Activated CD8-positive, alpha-beta T cell treated with anti-CD3 and anti-CD28 coated beads for 36 hours (primary cell): ENCODE measurements at regions of chr15 and their contacts with region 1.

Region 1: DNA sequence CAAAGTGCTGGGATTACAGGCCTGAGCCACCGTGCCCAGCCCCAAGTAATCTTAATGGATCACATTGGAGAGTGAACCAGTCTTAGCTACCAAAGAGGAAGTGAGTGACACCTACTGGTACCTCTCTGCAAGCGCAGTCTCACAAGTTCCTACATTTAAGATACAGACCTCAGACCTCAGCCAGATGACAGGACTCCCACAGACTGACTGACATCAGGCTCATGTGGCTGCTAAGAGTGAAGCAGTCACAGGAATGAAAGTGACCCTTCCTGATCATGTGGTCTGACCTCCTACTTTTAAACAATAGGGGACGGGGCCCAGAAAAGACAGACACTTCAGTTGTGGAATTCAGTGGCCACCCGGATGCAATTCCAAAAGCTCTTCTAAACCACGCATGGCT is 36.3 kb upstream of the GNB5 start:
- DNase-seq: peak; percentile 88
- ATAC-seq: peak; percentile 99
- H3K4me3 Mint-ChIP-seq: no peak overlapping the region
- H3K27ac Mint-ChIP-seq: peak overlapping the region; percentile 57
- H3K4me1 Mint-ChIP-seq: peaks cover 17% of the 10 kb centered on the region
- H3K27me3 Mint-ChIP-seq: no peaks in the 10 kb centered on the region
- CTCF ChIP-seq: peak; percentile 86

Region 2: DNA sequence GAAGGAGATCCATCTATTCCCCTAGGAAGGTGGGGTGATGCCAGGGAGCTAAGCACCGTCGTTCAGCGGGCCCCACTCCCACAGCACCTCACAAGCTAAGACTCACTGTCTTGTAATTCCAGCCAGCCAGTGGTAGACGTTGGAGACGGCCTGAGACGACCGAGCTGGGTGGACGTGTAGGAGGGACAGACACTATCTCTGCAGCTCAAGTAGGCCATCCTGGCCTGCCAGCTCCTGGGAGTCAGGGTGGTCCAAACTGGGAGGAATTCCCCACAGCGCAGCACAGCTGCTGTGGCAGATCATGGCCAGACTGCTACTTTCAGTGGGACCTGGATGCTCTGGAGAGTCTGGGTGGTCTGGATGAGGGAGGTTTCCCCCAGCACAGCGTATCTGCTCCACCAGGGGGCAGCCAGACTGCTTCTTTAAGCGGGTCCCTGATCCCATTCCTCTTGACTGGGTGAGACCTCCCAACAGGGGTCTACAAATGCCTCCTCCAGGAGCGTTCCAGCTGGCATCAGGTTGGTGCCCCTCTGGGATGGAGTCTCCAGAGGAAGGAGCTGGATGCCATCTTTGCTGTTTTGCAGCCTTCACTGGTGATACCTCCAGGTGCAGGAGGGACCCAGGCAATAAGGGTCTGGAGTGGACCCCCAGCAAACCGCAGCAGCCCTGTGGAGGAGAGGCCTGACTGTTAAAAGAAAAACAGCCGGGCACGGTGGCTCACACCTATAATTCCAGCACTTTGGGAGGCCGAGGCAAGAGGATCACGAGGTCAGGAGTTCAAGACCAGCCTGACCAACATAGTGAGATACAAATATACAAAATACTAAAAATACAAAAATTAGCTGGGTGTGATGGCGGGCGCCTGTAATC is 63.9 kb before region 1 on chr15:
- CTCF ChIA-PET with region 1: interaction called, 43 read pairs
- POLR2A ChIA-PET with region 1: interaction called, 3 read pairs
- intact Hi-C with region 1: no loop called
- DNase-seq: peak; percentile 52
- ATAC-seq: peak; percentile 61
- H3K4me3 Mint-ChIP-seq: no peak overlapping the region
- H3K27ac Mint-ChIP-seq: no peak overlapping the region
- H3K4me1 Mint-ChIP-seq: peaks cover 28% of the 10 kb centered on the region
- H3K27me3 Mint-ChIP-seq: no peaks in the 10 kb centered on the region
- CTCF ChIP-seq: no peak

Region 3: DNA sequence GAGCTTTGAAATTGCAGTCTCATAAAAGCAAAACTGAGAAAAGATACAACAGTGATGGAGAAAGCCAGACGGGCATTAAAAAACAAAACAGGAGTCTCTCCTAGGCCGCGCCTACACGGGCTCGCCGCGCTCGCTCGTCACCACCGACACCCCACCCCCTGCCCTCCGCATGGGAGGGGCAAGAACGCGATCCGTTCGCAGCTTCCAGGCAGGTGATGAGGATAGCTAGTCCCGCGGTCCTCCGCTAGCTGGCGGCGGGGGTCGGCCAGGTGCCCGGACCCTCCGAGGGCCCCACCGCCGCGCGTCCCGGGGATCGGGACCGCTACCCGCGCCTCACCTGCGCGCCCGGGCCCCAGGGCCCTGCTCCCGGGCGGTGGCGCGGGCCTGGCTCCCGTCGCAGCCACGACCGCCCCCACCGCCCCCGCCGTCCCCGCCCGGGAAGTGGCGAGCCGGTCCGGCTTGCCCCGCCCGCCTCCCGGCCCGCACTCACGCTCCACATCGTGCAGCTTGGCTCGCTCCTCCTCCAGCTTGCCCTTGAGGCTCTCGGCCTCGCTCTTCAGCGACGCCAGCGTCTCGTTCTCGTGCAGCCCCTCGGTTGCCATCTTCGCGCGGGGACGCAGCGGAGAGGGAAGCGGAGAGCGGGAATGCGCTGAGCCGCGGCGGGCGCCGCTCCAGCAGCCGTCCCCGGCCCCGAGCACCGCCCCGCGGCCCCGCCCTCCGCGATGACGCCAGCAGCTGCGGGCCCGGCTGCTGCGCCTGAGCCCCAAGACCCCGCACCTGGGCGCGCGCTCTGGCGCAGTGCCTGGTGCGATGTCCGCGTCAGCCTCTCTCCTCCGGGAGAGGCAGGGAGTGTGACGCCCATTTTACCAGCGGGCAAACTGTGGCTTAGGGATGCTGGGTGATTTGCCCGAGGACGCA is 47.9 kb before region 1 on chr15:
- CTCF ChIA-PET with region 1: interaction called, 27 read pairs
- POLR2A ChIA-PET with region 1: interaction called, 3 read pairs
- intact Hi-C with region 1: loop called (anchors 5 kb)
- DNase-seq: peak; percentile 91
- ATAC-seq: peak; percentile 90
- H3K4me3 Mint-ChIP-seq: peak overlapping the region; percentile 78
- H3K27ac Mint-ChIP-seq: peak overlapping the region; percentile 94
- H3K4me1 Mint-ChIP-seq: peaks cover 20% of the 10 kb centered on the region
- H3K27me3 Mint-ChIP-seq: no peaks in the 10 kb centered on the region
- CTCF ChIP-seq: peak; percentile 31

Region 4: DNA sequence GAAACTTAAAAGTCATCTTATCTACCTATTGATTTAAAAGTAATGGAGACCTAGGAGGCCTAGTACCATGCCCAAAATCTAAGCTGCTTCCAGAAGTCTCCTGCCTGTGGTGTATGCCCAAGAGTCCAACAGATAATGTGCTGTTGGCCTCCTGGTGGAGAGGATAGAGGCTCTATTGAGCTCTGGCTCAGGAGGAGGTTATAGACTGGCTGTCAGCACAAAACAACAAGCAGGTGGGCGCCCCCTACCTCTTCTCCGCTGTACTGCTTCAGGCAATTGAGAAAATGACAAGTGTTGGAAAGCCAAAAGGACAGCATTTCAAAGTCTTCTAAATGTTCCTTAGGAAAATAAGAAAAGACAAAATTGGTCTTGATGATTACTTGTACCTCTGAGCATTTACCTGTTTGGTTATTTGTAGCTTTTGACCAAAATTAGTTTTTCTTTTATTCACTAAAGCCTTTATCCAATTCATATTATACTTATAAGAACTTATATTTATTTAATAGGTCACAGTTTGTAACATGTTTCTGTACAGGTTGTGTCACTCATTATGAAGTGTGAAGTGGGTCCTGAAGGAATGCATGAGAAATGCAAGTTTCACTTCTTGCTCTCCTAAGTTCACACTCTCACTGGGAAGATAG is 19.0 kb before region 1 on chr15:
- CTCF ChIA-PET with region 1: interaction called, 54 read pairs
- POLR2A ChIA-PET with region 1: no interaction called
- intact Hi-C with region 1: no loop called
- DNase-seq: peak; percentile 90
- ATAC-seq: peak; percentile 100
- H3K4me3 Mint-ChIP-seq: no peak overlapping the region
- H3K27ac Mint-ChIP-seq: no peak overlapping the region
- H3K4me1 Mint-ChIP-seq: no peaks in the 10 kb centered on the region
- H3K27me3 Mint-ChIP-seq: no peaks in the 10 kb centered on the region
- CTCF ChIP-seq: peak; percentile 95

Region 5: DNA sequence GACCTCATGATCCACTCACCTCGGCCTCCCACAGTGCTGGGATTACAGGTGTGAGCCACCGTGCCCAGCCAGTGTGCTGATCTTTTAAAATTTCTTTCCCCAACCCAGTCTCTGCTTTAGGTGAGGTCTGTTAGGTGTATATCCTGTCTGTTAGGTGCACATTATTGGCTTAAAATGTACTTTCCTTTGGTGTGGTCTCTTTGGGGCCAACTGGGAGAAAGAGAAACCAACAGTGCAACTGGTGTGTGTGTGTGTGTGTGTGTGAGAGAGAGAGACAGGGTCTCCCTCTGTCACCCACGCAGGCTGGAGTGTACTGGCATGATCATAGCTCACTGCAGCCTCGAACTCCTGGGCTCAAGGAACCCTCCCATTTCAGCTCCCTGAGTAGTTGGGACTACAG is 14.0 kb after region 1 on chr15:
- CTCF ChIA-PET with region 1: interaction called, 21 read pairs
- POLR2A ChIA-PET with region 1: interaction called, 3 read pairs
- intact Hi-C with region 1: no loop called
- DNase-seq: peak; percentile 31
- ATAC-seq: peak; percentile 79
- H3K4me3 Mint-ChIP-seq: no peak overlapping the region
- H3K27ac Mint-ChIP-seq: peak overlapping the region; percentile 31
- H3K4me1 Mint-ChIP-seq: peaks cover 7% of the 10 kb centered on the region
- H3K27me3 Mint-ChIP-seq: no peaks in the 10 kb centered on the region
- CTCF ChIP-seq: no peak

Region 6: DNA sequence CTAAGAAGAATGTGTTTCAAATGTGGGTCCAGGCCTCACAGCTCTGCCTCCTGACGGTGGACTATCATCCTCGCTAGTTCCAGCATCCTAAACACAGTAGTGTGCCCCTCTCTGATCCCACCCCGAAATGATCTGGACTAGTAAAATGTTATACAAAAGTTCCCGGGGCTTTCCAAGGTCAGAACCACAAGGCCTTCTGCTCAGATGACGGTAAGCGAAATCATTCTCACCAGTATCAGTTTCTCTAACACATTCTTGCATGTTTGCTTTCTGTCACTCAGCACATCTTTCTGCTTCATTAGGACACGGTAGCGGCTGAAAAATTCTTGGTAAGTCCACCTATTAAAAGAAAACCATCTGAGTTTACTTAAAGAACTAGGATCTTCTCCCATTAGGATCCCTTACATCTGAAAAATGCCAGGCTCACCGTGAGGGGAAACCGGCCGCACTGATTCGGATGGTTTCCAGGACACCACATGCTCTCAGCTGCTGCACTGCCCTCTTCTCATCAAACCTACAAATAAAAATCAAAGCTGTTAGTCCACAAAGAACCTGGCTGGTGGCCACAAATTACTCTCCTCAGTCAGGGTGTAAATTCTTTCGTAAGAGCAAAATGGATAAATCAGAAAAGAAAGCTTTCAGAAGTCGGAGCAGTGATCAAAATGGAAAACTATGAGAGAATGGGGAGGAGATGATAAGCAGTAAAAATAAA is 152.1 kb after region 1 on chr15:
- CTCF ChIA-PET with region 1: no interaction called
- POLR2A ChIA-PET with region 1: no interaction called
- intact Hi-C with region 1: no loop called
- DNase-seq: peak; percentile 16
- ATAC-seq: peak; percentile 61
- H3K4me3 Mint-ChIP-seq: no peak overlapping the region
- H3K27ac Mint-ChIP-seq: peak overlapping the region; percentile 66
- H3K4me1 Mint-ChIP-seq: peaks cover 23% of the 10 kb centered on the region
- H3K27me3 Mint-ChIP-seq: no peaks in the 10 kb centered on the region
- CTCF ChIP-seq: no peak

Region 7: DNA sequence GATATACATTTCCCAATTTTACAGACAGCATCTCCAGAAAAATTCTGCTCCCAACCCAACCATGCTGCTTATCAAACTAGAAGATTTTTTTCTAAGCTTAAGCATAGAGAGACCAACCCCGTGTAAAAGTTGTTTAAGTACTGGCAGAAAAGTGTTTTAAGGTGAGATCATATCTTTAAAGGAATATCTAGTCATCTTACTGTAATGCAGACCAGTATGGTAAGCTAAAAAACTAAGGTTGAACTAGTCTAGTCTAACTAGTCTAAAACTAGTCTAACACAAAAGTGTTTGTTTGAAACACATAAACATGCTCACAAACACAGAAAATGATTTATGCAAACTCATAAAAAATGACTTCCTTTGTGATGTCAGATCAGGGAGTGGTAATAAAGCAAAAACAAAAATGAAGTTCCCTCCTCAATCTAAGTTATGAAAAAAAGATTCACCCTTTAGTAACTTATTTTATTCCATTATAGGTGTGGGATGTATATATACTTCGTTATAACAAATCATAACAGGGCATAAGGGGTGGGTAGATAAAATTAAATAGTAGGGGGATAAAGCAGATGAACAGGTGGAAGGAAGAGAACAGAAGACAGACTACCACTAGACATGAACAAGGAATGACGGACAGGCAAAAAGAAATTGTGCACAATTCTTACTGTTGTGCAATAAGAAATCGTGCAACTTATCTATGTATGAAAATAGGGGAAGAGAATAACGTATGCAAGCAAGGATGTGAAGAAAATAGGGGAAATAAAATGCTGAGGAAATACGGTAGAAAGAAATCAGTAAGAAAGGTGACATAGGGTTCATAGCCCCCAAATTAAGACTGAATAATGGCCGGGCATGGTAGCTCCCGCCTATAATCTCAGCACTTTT is 291.3 kb after region 1 on chr15:
- CTCF ChIA-PET with region 1: no interaction called
- POLR2A ChIA-PET with region 1: no interaction called
- intact Hi-C with region 1: no loop called
- DNase-seq: no peak
- ATAC-seq: no peak
- H3K4me3 Mint-ChIP-seq: no peak overlapping the region
- H3K27ac Mint-ChIP-seq: no peak overlapping the region
- H3K4me1 Mint-ChIP-seq: peaks cover 7% of the 10 kb centered on the region
- H3K27me3 Mint-ChIP-seq: no peaks in the 10 kb centered on the region
- CTCF ChIP-seq: no peak